Dorsolateral prefrontal cortex (tissue), 120 donors: ENCODE measurements at regions of chr15 and their contacts with region 1.

Region 1: DNA sequence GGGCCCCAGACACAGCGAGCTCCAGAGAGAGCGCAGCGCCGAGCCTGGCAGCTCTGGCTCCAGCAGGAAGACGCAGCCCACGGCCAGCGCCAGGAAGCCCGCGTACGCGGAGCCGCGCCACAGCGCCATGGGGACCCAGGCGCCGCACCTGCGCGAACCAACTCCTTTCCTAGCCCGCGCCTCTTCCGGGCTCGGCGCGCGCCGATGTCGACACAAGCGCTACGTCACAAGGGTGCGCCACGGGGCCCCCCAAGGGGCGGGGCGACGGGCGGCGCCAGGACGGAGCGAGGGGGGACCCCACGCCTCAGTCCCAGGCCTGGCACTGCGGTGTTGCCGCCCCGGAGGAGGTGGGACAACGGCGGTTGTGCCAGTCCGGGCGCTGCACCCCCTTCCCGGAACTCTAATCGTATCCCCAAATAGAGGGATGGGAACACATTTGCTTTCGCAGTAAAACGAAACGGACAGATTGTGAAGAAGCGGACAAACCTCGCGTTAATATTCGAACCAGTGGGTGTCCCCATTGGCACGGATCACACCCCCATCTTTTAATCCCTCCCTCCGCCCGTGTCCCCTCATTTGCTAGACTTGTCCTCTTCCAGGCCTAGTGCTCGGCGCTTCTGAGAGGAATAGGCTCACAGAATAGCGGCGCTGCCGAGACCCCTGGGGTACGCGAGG is at the start of gene ADPGK:
- DNase-seq: peak; percentile 80 to 96 (median 88)
- H3K4me3 ChIP-seq: peak within 1 kb of the TSS; percentile 63 to 100 (median 98)
- H3K27ac ChIP-seq: peak within 1 kb of the TSS; percentile 76 to 99 (median 96)
- H3K27me3 ChIP-seq: no peaks in the 10 kb centered on the region
- CTCF ChIP-seq: peak in 25 of 56 donors; percentile 3 to 51 (median 29)
- total RNA-seq, gene ADPGK: 18.9 to 53.0 (median 30.7) TPM

Region 2: DNA sequence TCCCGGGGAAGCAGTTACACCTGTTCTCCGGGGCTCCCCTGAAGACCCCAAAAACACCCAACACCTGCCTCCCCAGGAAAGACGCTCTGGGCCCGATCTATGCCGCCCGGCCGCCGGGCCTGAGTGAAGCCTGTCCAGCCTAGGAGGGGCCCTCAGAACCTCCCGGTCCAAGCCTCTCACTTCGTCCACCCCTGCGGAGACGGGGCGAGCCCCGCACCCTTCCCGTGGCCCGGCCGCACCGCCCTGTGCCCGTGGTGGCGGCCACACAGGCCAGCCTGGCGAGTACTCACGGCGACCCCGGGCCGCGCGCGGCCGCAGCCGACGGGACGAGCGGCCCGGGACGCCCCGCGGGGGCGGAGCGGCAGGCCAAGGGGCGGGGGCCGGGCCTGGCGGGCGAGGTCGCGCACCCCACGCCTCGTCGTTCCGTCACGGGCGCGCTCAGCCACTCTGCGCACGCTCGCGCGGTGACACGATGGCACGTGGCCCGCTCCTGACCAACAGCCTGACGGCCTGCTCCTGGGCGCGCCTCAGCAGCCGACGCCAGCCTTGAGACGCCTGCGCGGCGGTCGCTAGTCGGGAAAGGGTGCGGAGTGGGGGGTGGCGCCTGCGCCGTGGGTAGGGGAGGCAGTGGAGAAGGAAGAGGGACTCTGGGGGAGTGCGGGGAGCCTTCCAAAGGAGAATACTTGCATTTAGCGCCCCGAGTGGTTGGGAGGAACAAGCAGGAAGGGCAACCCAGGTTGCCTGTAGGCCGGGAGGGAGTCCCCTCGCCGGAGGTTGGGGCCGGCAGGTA is 511.3 kb before region 1 on chr15 and contains the start of gene PARP6:
- intact Hi-C with region 1: loop called in 1 of 2 experiments (anchors 5 kb)
- DNase-seq: peak; percentile 95 to 98 (median 97)
- H3K4me3 ChIP-seq: peak within 1 kb of the TSS; percentile 66 to 99 (median 93)
- H3K27ac ChIP-seq: peak within 1 kb of the TSS; percentile 18 to 96 (median 87)
- H3K27me3 ChIP-seq: no peaks in the 10 kb centered on the region
- CTCF ChIP-seq: peak; percentile 71 to 98 (median 89)
- total RNA-seq, gene PARP6: 89.7 to 152 (median 117) TPM

Region 3: DNA sequence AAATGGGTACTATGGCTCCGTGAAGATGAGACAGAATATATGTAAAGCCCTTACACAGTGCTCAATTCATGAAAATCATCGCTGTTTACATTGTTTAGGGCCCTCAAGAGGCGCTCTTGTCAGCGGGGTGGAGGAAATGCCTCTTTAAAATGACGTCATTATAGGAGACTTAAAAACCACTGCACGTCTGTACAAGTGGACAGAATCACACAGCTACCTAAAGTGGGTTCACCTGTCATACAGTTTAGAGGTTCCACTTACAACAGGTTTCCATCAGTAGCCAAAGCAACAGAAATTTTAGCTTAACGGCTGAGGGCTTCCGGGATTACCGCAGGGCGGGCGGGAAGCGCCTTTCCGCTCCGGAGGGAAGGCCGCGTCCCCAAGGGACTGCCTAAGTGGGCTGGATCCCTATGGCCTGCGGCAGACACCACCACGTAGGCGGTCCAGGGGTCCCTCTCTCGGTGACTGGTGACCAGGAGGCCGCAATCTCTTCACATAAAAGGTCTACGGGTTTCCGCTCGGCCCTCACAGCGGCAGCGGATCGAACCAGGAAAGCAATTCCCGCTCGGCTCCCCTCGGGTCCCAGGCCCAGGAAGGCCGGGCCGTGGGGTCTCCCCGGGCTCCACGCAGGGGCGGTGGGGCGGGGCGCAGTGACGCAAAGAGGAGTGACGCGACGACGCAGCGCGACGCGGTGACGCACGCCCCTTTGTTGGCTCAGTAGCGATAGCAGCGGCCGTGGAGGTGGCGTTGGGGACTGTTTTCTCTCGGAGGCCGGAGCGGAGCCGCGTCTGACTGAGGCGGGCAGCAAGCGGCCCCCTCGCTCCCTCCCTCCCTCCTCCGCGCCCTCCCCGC is 309.9 kb before region 1 on chr15 and contains the start of gene ARIH1:
- intact Hi-C with region 1: loop called in 1 of 2 experiments (anchors 5 kb)
- DNase-seq: peak; percentile 96 to 99 (median 98)
- H3K4me3 ChIP-seq: peak within 1 kb of the TSS; percentile 63 to 99 (median 86)
- H3K27ac ChIP-seq: peak within 1 kb of the TSS; percentile 96 to 100 (median 99)
- H3K27me3 ChIP-seq: no peaks in the 10 kb centered on the region
- CTCF ChIP-seq: peak in 32 of 56 donors; percentile 11 to 41 (median 24)
- total RNA-seq, gene ARIH1: 131 to 235 (median 191) TPM

Region 4: DNA sequence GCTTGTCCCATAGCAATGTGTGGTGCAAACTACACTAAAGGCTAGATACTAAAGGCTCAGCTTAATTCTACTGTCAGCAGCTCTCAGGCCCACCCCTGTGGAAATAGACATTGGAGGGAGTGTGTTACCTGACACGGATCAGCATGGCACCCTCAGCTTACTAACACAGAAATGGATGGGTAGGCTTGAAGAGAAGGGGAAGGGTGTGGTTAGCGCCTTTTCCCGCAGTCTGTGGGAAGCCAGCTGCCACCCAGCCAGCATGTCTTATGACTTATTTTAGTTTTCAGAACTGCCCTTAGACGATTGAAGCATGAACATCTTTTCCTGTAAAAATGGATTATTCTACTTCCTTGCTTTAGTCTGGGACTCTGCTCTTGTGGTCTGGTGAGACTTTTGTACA is 25.6 kb after region 1 on chr15:
- intact Hi-C with region 1: no loop called
- DNase-seq: no peak
- H3K4me3 ChIP-seq: no peak overlapping the region
- H3K27ac ChIP-seq: no peak overlapping the region
- H3K27me3 ChIP-seq: no peaks in the 10 kb centered on the region
- CTCF ChIP-seq: no peak

Region 5: GRCh38 chr15:73081321-73081958 is 297.7 kb after region 1 on chr15:
- intact Hi-C with region 1: loop called (anchors 5 kb)
- DNase-seq: peak in 1 of 10 donors; percentile 32
- H3K4me3 ChIP-seq: peak overlapping the region in 1 of 59 donors; percentile 12
- H3K27ac ChIP-seq: peak overlapping the region in 41 of 59 donors; percentile 2 to 94 (median 52)
- H3K27me3 ChIP-seq: no peaks in the 10 kb centered on the region
- CTCF ChIP-seq: peak; percentile 63 to 99 (median 82)

Region 6: DNA sequence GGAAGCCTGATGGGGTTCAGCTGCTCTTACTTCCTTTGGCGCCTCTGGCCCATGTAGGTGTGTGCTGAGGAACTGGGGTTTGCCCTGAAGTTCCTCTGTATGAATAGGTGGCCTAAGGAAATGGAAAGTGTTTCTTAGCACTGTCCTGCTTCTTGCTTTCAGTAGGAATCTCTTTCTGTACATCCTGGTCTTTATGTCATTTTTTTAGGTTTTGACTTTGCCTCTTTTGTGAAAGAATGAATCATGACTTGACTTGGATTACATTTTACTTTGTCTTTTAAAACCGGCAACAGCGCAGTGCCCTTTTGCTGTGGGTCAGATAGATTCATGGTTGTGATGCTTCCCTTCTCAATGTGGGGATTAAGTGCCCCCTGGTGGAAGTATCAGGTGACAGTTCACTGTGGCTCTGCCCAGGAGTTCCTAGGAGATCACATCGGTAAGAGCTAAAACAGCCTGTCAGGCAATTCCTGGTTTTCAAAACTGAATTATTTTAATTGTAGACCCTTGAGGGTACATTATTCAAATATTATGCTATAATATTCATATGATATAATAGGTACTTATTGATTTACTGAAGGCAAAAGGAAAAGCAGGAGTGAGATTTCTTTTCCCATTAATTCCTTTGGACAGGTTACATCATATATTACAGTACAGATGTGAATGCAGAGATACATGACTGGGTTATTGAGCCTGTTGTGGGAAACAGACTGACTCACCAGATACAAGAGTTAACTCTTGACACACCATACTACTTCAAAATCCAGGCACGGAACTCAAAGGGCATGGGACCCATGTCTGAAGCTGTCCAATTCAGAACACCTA is 489.7 kb after region 1 on chr15:
- intact Hi-C with region 1: loop called (anchors 5 kb)
- DNase-seq: peak in 6 of 10 donors; percentile 35 to 69 (median 60)
- H3K4me3 ChIP-seq: no peak overlapping the region
- H3K27ac ChIP-seq: peak overlapping the region in 2 of 59 donors; percentile 44 to 60
- H3K27me3 ChIP-seq: no peaks in the 10 kb centered on the region
- CTCF ChIP-seq: peak; percentile 46 to 94 (median 84)

Region 7: DNA sequence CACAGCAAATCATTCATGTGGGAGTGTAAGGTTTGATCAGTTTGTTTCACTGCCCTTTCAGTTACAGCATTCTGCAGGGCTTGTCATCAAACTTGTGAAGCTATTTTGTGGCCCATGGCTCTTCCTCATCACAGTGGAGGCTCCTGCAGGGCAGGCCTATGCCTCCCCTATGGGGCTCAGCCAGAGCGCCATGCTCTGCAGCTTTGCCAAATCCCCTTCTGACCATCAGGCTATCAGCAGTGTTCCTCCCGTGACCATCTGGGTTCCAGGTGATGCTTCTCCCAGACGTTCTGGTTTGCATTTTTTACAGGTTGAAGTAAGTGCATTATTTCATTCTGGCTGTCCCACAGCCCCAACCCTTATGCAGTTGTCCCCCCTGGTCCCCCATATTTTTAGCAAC is 631.2 kb after region 1 on chr15:
- intact Hi-C with region 1: no loop called
- DNase-seq: peak in 1 of 10 donors; percentile 30
- H3K4me3 ChIP-seq: no peak overlapping the region
- H3K27ac ChIP-seq: no peak overlapping the region
- H3K27me3 ChIP-seq: peaks cover 0 to 21% (median 0%) of the 10 kb centered on the region in 45 donors
- CTCF ChIP-seq: no peak